Heart left ventricle (tissue), 16 donors: ENCODE measurements at regions of chr20 and their contacts with region 1.

Region 1: GRCh38 chr20:728248-728944 is 39.9 kb downstream of the SLC52A3 start:
- DNase-seq: peak in 4 of 5 donors; percentile 33 to 73 (median 61)
- ATAC-seq: peak; percentile 69 to 89 (median 82)
- H3K4me3 ChIP-seq: peak overlapping the region; percentile 20 to 70 (median 61)
- H3K27ac ChIP-seq: peak overlapping the region in 1 of 12 donors; percentile 52
- H3K4me1 ChIP-seq: peaks cover 0 to 13% (median 3%) of the 10 kb centered on the region in 12 donors
- H3K27me3 ChIP-seq: peaks cover 0 to 52% (median 9%) of the 10 kb centered on the region in 9 donors
- CTCF ChIP-seq: peak; percentile 50 to 75 (median 65)
- POLR2A ChIP-seq: no peak

Region 2: DNA sequence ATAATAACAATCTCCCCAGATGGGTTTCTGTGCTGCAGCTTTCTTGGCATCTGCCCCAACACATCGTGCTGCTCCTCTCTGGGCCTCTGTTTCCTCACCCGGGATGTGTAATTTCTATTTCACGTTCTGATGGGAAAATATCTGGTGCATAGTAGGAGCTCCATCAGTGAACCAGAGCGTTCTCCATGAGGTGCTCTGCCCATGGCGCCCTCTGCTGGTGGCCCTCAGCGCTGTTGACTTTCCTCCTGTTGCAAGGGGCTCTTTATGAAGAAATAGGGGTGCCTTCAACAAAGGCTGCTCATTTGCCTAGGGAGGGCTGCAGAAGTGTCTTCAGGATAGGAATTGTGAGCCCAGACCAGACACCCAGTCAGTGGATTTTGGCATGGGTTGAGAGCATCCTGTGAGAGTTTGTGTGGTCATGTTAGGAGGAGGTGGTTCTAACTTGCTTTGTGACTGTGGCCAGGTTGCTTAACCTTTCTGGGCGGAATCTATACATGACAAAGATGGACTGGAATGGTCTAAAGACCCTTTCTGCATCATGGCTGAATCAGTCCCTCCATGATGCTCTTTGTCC is 60.9 kb before region 1 on chr20:
- intact Hi-C with region 1: loop called in 4 of 10 experiments (anchors 5 kb)
- DNase-seq: peak in 2 of 5 donors; percentile 60 to 75
- ATAC-seq: peak in 2 of 4 donors; percentile 45 to 51
- H3K4me3 ChIP-seq: no peak overlapping the region
- H3K27ac ChIP-seq: peak overlapping the region in 11 of 12 donors; percentile 6 to 80 (median 62)
- H3K4me1 ChIP-seq: peaks cover 0 to 53% (median 10%) of the 10 kb centered on the region in 12 donors
- H3K27me3 ChIP-seq: peaks cover 6 to 57% (median 39%) of the 10 kb centered on the region in 9 donors
- CTCF ChIP-seq: peak; percentile 71 to 92 (median 81)
- POLR2A ChIP-seq: no peak

Region 3: GRCh38 chr20:675453-676314 is 52.7 kb before region 1 on chr20 and contains the start of gene SCRT2:
- intact Hi-C with region 1: loop called in 1 of 10 experiments (anchors 5 kb)
- DNase-seq: peak; percentile 83 to 92 (median 86)
- ATAC-seq: peak; percentile 50 to 97 (median 92)
- H3K4me3 ChIP-seq: peak within 1 kb of the TSS in 9 of 12 donors; percentile 5 to 49 (median 36)
- H3K27ac ChIP-seq: no peak within 1 kb of the TSS
- H3K4me1 ChIP-seq: peaks cover 7 to 34% (median 17%) of the 10 kb centered on the region in 12 donors
- H3K27me3 ChIP-seq: peaks cover 0 to 66% (median 34%) of the 10 kb centered on the region in 9 donors
- CTCF ChIP-seq: no peak
- POLR2A ChIP-seq: no peak
- total RNA-seq, gene SCRT2: not detected